Panc1 (cell line): ENCODE measurements at regions of chr10 and their contacts with region 1.

Region 1: GRCh38 chr10:128191847-128192246 is 65.6 kb upstream of the MKI67 start:
- DNase-seq: no peak
- ATAC-seq: peak; percentile 91
- H3K4me3 ChIP-seq: no peak overlapping the region
- H3K27ac ChIP-seq: no peak overlapping the region
- H3K4me1 ChIP-seq: no peaks in the 10 kb centered on the region
- H3K27me3 ChIP-seq: no peaks in the 10 kb centered on the region
- CTCF ChIP-seq: no peak

Region 2: DNA sequence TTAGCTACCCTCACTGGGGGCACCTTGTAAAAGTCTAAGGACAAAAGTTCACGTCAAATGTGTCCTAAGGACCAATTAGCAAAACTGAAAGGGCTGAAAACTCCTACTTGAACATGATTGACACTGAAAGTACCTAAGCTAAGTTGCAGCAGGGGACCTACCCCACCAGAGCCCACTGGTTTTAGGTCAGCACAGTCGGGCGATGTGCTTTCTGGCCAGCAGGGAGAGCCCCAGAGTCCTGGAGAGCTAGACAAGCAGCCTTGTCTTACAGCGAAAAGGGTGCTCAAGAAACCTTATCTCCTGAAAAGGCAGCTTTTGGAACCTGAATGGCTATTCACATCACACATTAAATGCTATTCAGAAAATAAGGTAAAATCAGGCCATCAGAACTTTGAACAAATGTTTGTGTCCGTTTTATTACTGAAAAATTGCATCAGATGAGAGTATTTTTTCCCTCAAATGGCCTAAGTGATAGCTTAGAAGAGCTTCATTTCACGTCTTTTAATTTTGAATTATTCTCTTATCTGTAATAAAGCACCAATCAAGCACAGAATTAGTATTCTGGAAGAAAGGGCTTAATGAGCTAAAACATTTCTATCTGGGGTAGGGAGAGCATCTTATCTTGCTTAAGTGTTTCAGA is 13.4 kb before region 1 on chr10:
- CTCF ChIA-PET with region 1: interaction called, 10 read pairs
- POLR2A ChIA-PET with region 1: no interaction called
- in situ Hi-C with region 1: no loop called
- intact Hi-C with region 1: no loop called
- DNase-seq: no peak
- ATAC-seq: peak; percentile 97
- H3K4me3 ChIP-seq: no peak overlapping the region
- H3K27ac ChIP-seq: no peak overlapping the region
- H3K4me1 ChIP-seq: no peaks in the 10 kb centered on the region
- H3K27me3 ChIP-seq: peaks cover 9% of the 10 kb centered on the region
- CTCF ChIP-seq: peak; percentile 91

Region 3: GRCh38 chr10:128254476-128254875 is 62.6 kb after region 1 on chr10:
- CTCF ChIA-PET with region 1: no interaction called
- POLR2A ChIA-PET with region 1: no interaction called
- in situ Hi-C with region 1: no loop called
- intact Hi-C with region 1: no loop called
- DNase-seq: no peak
- ATAC-seq: no peak
- H3K4me3 ChIP-seq: no peak overlapping the region
- H3K27ac ChIP-seq: no peak overlapping the region
- H3K4me1 ChIP-seq: no peaks in the 10 kb centered on the region
- H3K27me3 ChIP-seq: peaks cover 23% of the 10 kb centered on the region
- CTCF ChIP-seq: no peak